Head of caudate nucleus (tissue), 42 donors: ENCODE measurements at regions of chr7 and their contacts with region 1.

Region 1: DNA sequence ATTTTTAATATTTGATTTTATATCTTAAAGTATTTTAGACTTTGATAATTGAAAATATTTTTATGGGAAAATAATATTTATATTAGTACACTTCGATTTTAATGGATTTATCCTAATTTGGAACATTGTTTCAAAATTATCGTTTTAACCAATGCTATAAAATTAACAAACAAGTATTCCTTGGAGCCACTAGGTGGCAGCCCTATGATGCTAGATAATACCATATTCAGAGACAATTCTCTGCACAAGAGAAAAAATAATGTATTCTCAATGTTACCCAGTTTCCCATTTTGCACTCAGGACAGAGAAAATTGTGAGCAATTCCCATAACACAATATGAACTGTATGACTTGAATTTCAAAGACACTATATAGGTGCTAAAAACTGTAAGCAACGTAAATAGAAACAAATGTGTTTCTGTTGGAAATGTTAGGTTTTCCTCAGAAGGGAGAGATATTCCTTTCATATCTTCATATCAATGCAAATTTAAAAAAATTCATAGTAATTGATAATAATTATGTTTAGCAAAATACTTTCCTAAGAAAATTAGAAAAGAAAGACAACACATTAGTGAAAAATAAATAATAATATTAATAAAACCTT is 237.8 kb downstream of the SEMA3E start:
- DNase-seq: peak in 25 of 42 donors; percentile 6 to 75 (median 37)

Region 2: DNA sequence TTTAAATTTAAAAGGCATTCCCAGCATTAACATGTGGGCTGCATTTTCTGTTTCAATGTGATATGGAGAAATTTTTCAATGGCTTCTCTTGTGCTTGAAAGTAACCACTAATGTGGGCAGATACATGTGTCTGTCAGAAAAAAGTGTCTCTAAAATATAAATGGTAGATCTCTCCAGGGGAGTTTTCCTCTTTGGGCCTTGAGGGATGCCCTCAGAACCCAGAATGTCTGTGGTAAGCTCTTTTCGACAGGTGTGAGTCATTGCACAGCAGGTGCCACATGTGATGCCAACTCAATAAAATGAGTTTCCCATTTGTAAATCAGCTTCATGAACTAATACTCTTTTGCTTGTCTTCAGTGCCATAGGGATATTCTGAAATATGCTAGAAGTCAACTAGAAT is 16.8 kb after region 1 on chr7:
- intact Hi-C with region 1: no loop called
- DNase-seq: no peak

Region 3: DNA sequence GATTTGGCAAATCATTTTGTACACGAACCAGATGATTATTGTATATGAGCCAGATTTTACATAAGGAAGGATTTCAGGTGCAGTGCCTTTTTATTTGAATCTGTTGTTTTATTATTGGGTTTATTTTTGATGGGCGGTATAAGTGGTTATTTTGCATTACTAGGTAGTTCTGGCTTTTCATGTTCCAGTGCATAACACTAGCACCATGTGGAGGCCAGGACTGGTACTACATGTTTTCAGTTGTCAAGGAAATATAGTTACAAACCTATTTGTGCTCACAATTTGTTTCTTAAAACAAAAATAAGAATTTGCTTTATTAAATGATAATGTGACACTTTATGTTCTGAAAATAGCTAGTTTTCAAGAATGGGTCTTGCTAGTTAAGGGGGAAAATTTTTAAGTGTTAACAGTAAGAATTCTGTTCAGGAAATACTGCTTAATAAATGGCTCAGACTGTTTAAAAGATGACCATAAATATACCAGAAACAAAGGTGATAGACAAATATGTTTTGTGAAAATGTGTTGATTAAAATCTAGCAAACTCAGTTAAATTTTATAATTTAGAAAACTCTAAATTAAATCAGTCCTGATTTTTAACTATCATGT is 245.0 kb after region 1 on chr7:
- intact Hi-C with region 1: loop called (anchors 10 kb)
- DNase-seq: peak in 30 of 42 donors; percentile 9 to 78 (median 40)